ENCODE measurements at regions of chr6 and their contacts with region 1.

Region 1: GRCh38 chr6:17405944-17406245 is 12.5 kb downstream of the CAP2 start:
- DNase-seq: no peak
- ATAC-seq: peak; percentile 67
- H3K4me3 ChIP-seq: no peak overlapping the region
- H3K27ac ChIP-seq: no peak overlapping the region
- H3K4me1 ChIP-seq: no peaks in the 10 kb centered on the region
- H3K27me3 ChIP-seq: no peaks in the 10 kb centered on the region
- CTCF ChIP-seq: no peak
- EP300 ChIP-seq: no peak
- POLR2A ChIP-seq: no peak
- RAD21 ChIP-seq: no peak

Region 2: DNA sequence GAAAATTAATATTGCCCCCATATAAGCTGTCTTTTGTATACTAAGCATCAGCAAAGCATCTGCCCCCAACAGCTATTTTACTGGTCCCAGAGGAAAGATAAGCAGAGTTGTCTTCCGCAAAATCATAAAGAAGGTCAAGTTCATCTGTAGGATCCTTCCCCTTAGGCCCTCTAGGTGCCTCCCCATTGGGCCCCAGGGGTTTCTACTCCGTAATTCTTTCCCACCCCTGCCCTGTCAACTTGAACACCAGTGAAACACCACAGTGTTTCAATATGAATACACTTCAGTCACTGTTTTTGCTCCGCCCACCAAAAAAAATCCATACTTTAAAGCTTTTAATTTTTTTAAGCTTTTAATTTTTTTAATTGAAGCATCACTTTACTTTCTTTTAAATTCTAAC is 803.9 kb before region 1 on chr6:
- CTCF ChIA-PET with region 1: no interaction called
- POLR2A ChIA-PET with region 1: no interaction called
- RAD21 ChIA-PET with region 1: no interaction called
- SMC1A ChIA-PET with region 1: no interaction called
- in situ Hi-C with region 1: no loop called
- intact Hi-C with region 1: no loop called
- DNase-seq: peak; percentile 53
- ATAC-seq: peak; percentile 94
- H3K4me3 ChIP-seq: no peak overlapping the region
- H3K27ac ChIP-seq: no peak overlapping the region
- H3K4me1 ChIP-seq: peaks cover 32% of the 10 kb centered on the region
- H3K27me3 ChIP-seq: no peaks in the 10 kb centered on the region
- CTCF ChIP-seq: no peak
- EP300 ChIP-seq: peak; percentile 34 to 69; a peak in 2 of 4 replicates
- POLR2A ChIP-seq: no peak
- RAD21 ChIP-seq: no peak

Region 3: GRCh38 chr6:17354700-17355403 is 51.0 kb before region 1 on chr6:
- CTCF ChIA-PET with region 1: interaction called, 3 read pairs
- POLR2A ChIA-PET with region 1: interaction called, 5 read pairs
- RAD21 ChIA-PET with region 1: interaction called, 10 read pairs
- SMC1A ChIA-PET with region 1: interaction called, 20 read pairs
- in situ Hi-C with region 1: no loop called
- intact Hi-C with region 1: no loop called
- DNase-seq: peak; percentile 4
- ATAC-seq: peak; percentile 83
- H3K4me3 ChIP-seq: no peak overlapping the region
- H3K27ac ChIP-seq: no peak overlapping the region
- H3K4me1 ChIP-seq: no peaks in the 10 kb centered on the region
- H3K27me3 ChIP-seq: no peaks in the 10 kb centered on the region
- CTCF ChIP-seq: no peak
- EP300 ChIP-seq: no peak
- POLR2A ChIP-seq: no peak
- RAD21 ChIP-seq: no peak

Region 4: GRCh38 chr6:17392978-17393891 is 12.7 kb before region 1 on chr6 and contains the start of gene CAP2:
- CTCF ChIA-PET with region 1: interaction called, 8 read pairs
- POLR2A ChIA-PET with region 1: interaction called, 4 read pairs
- RAD21 ChIA-PET with region 1: interaction called, 25 read pairs
- SMC1A ChIA-PET with region 1: interaction called, 7 read pairs
- in situ Hi-C with region 1: no loop called
- intact Hi-C with region 1: no loop called
- DNase-seq: no peak
- ATAC-seq: peak; percentile 63
- H3K4me3 ChIP-seq: no peak within 1 kb of the TSS
- H3K27ac ChIP-seq: no peak within 1 kb of the TSS
- H3K4me1 ChIP-seq: no peaks in the 10 kb centered on the region
- H3K27me3 ChIP-seq: peaks cover 4 to 6% of the 10 kb centered on the region in 2 experiments; a peak in 3 of 4 replicates
- CTCF ChIP-seq: no peak
- EP300 ChIP-seq: no peak
- POLR2A ChIP-seq: no peak
- RAD21 ChIP-seq: no peak
- polyA plus RNA-seq, gene CAP2: not detected

Region 5: DNA sequence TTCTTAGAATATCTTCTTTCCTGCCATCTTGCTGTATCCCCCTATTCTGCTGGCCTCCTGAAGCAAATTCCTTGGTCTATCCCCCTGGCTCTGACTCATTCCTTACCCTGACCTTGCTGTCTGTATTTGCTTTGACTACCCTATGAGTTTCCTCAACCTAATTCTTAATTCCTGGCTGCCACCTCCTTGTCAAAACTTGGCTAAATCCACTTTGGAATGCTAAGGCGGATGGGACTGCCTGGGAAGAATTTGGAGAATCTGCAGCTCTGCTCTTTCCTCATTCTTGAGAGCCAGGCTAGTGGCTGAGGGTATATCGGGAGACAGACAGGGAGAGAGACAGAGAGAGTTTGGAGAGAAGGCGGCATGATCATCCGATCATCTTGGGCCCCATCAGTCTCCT is 11.9 kb after region 1 on chr6:
- CTCF ChIA-PET with region 1: interaction called, 18 read pairs
- POLR2A ChIA-PET with region 1: interaction called, 9 read pairs
- RAD21 ChIA-PET with region 1: interaction called, 8 read pairs
- SMC1A ChIA-PET with region 1: interaction called, 46 read pairs
- in situ Hi-C with region 1: no loop called
- intact Hi-C with region 1: no loop called
- DNase-seq: no peak
- ATAC-seq: no peak
- H3K4me3 ChIP-seq: no peak overlapping the region
- H3K27ac ChIP-seq: no peak overlapping the region
- H3K4me1 ChIP-seq: no peaks in the 10 kb centered on the region
- H3K27me3 ChIP-seq: no peaks in the 10 kb centered on the region
- CTCF ChIP-seq: no peak
- EP300 ChIP-seq: no peak
- POLR2A ChIP-seq: no peak
- RAD21 ChIP-seq: no peak

Region 6: GRCh38 chr6:17446713-17447112 is 40.8 kb after region 1 on chr6:
- CTCF ChIA-PET with region 1: no interaction called
- POLR2A ChIA-PET with region 1: interaction called, 4 read pairs
- RAD21 ChIA-PET with region 1: interaction called, 15 read pairs
- SMC1A ChIA-PET with region 1: interaction called, 5 read pairs
- in situ Hi-C with region 1: no loop called
- intact Hi-C with region 1: no loop called
- DNase-seq: no peak
- ATAC-seq: peak; percentile 58
- H3K4me3 ChIP-seq: no peak overlapping the region
- H3K27ac ChIP-seq: no peak overlapping the region
- H3K4me1 ChIP-seq: peaks cover 5% of the 10 kb centered on the region
- H3K27me3 ChIP-seq: no peaks in the 10 kb centered on the region
- CTCF ChIP-seq: no peak
- EP300 ChIP-seq: no peak
- POLR2A ChIP-seq: no peak
- RAD21 ChIP-seq: no peak

Measured in GM12878 (cell line).